ENCODE measurements at regions of chr19 and their contacts with region 1.

Region 1: GRCh38 chr19:27974082-27974513 is 1238.9 kb downstream of the UQCRFS1 start:
- DNase-seq: peak; percentile 42
- H3K4me3 Mint-ChIP-seq: no peak overlapping the region
- H3K27ac Mint-ChIP-seq: no peak overlapping the region
- H3K4me1 Mint-ChIP-seq: peaks cover 25% of the 10 kb centered on the region
- H3K27me3 Mint-ChIP-seq: no peaks in the 10 kb centered on the region
- CTCF ChIP-seq: peak; percentile 30

Region 2: GRCh38 chr19:27851002-27851481 is 123.1 kb before region 1 on chr19:
- CTCF ChIA-PET with region 1: no interaction called
- intact Hi-C with region 1: no loop called
- DNase-seq: no peak
- H3K4me3 Mint-ChIP-seq: no peak overlapping the region
- H3K27ac Mint-ChIP-seq: no peak overlapping the region
- H3K4me1 Mint-ChIP-seq: no peaks in the 10 kb centered on the region
- H3K27me3 Mint-ChIP-seq: no peaks in the 10 kb centered on the region
- CTCF ChIP-seq: no peak

Region 3: GRCh38 chr19:28324275-28325060 is 350.4 kb after region 1 on chr19:
- CTCF ChIA-PET with region 1: no interaction called
- intact Hi-C with region 1: loop called (anchors 1 kb)
- DNase-seq: no peak
- H3K4me3 Mint-ChIP-seq: no peak overlapping the region
- H3K27ac Mint-ChIP-seq: no peak overlapping the region
- H3K4me1 Mint-ChIP-seq: no peaks in the 10 kb centered on the region
- H3K27me3 Mint-ChIP-seq: no peaks in the 10 kb centered on the region
- CTCF ChIP-seq: no peak

Region 4: DNA sequence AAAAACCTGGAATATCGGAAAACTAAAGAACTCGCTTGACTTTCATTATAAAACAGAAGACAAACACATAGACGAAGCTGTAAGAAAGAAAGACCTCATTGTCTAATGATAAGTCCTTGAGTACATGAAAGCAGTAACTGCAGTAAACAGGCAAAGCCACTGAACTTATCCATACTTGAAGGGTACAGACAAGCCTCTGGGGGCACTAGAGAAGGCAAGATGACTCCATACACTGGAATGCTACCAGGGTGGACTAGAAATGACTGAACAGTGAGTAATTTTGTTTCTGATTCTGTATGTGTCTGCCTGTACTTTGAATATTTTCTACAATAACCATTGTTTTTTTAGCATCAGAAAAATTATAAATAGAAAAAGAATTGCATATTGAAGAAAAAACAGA is 730.9 kb after region 1 on chr19:
- CTCF ChIA-PET with region 1: no interaction called
- intact Hi-C with region 1: loop called (anchors 5 kb)
- DNase-seq: peak; percentile 59
- H3K4me3 Mint-ChIP-seq: no peak overlapping the region
- H3K27ac Mint-ChIP-seq: peak overlapping the region; percentile 24
- H3K4me1 Mint-ChIP-seq: peaks cover 25% of the 10 kb centered on the region
- H3K27me3 Mint-ChIP-seq: no peaks in the 10 kb centered on the region
- CTCF ChIP-seq: peak; percentile 20